BJ (cell line): ENCODE measurements at regions of chr10 and their contacts with region 1.

Region 1: GRCh38 chr10:94320285-94320914 is 42.3 kb downstream of the NOC3L start:
- DNase-seq: no peak
- H3K4me3 ChIP-seq: no peak overlapping the region
- H3K27me3 ChIP-seq: no peaks in the 10 kb centered on the region
- CTCF ChIP-seq: peak; percentile 75

Region 2: DNA sequence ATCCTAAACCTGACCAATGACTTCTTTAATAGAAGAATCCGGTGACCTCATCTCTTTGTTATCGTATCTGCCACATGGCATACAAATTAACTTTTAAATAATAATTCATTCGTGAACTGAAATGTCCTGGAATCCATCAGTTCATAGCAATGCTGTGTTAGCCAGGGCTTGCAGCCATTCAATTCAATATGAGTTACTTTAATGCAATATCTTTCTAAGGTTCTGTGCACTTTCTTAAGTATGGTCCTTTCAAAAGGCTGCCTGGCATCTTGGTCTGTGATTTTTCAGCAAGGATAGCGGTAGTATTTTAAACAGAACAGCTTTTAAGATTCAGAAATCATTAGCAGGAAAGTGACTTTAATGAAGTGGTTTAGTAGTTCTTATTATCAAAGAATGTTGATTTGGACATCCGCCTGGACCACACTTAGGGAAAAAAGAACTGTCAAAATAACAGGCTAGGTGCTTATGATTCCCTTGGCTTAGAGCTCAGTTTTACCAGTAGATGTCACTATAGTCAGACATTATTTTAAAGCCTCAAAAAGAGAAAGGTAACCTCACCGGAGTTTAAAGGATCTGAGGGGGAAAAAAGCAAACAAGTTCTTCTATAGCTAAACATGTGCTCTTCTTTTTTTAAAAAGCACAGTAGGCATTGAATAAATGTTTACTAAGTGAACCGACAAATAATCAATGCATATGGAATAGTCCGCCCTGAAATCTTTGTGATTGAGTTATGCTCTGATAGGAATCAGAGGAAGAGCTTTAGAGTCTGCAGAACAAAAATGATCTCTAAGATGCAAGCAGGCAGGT is 403.9 kb before region 1 on chr10:
- CTCF ChIA-PET with region 1: interaction called, 65 read pairs
- POLR2A ChIA-PET with region 1: no interaction called
- DNase-seq: no peak
- H3K4me3 ChIP-seq: no peak overlapping the region
- H3K27me3 ChIP-seq: no peaks in the 10 kb centered on the region
- CTCF ChIP-seq: peak; percentile 60

Region 3: GRCh38 chr10:94076321-94076841 is 244.0 kb before region 1 on chr10:
- CTCF ChIA-PET with region 1: interaction called, 20 read pairs
- POLR2A ChIA-PET with region 1: no interaction called
- DNase-seq: peak; percentile 31
- H3K4me3 ChIP-seq: no peak overlapping the region
- H3K27me3 ChIP-seq: no peaks in the 10 kb centered on the region
- CTCF ChIP-seq: peak; percentile 62

Region 4: DNA sequence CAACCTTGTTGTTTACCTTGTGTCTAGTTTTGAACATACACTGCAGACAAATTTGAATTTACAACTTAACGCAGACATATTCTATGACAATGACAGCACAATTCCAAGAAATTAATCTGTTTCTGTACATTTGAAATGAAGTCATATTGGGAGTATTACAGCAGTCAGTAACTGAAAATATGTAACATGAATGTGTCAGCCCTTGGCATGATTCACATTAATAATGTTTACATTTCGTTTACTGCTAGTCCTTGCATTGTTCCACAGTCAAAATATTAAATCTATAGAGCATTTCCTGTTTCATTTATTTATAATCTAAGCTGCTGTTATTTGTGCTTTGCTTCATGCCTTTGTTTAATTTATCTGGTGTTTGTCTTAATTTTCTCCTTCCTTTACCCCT is 38.0 kb before region 1 on chr10:
- CTCF ChIA-PET with region 1: interaction called, 18 read pairs
- POLR2A ChIA-PET with region 1: no interaction called
- DNase-seq: no peak
- H3K4me3 ChIP-seq: no peak overlapping the region
- H3K27me3 ChIP-seq: no peaks in the 10 kb centered on the region
- CTCF ChIP-seq: no peak

Region 5: GRCh38 chr10:94303929-94304328 is 16.5 kb before region 1 on chr10:
- CTCF ChIA-PET with region 1: interaction called, 10 read pairs
- POLR2A ChIA-PET with region 1: no interaction called
- DNase-seq: no peak
- H3K4me3 ChIP-seq: no peak overlapping the region
- H3K27me3 ChIP-seq: peaks cover 7% of the 10 kb centered on the region
- CTCF ChIP-seq: no peak

Region 6: GRCh38 chr10:94334857-94335256 is 14.5 kb after region 1 on chr10:
- CTCF ChIA-PET with region 1: interaction called, 31 read pairs
- POLR2A ChIA-PET with region 1: no interaction called
- DNase-seq: no peak
- H3K4me3 ChIP-seq: no peak overlapping the region
- H3K27me3 ChIP-seq: no peaks in the 10 kb centered on the region
- CTCF ChIP-seq: no peak